ENCODE measurements at regions of chr3 and their contacts with region 1.

Region 1: DNA sequence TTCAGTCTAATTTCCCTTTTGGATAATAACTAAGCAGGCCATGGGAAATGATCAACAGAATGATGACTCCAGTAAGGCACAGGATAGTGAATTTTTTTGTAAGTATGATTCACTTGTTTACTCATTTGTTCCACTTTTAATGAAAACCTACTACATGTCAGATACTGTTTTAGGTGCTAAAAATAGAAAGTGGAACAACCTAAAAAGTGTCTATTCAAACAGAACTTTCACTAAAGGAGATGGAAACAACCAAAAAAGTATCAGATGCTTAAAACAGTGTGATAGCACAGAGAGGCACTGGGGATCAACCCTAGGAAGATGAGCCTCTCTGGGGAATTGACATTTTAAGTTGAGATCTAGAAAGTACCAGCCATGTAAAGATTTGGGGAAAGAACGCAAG is 11.1 kb downstream of the RYK start:
- DNase-seq: no peak
- H3K4me3 Mint-ChIP-seq: peak overlapping the region; percentile 51
- H3K27ac Mint-ChIP-seq: peak overlapping the region; percentile 62
- H3K4me1 Mint-ChIP-seq: peaks cover 37% of the 10 kb centered on the region
- H3K27me3 Mint-ChIP-seq: peaks cover 19% of the 10 kb centered on the region

Region 2: DNA sequence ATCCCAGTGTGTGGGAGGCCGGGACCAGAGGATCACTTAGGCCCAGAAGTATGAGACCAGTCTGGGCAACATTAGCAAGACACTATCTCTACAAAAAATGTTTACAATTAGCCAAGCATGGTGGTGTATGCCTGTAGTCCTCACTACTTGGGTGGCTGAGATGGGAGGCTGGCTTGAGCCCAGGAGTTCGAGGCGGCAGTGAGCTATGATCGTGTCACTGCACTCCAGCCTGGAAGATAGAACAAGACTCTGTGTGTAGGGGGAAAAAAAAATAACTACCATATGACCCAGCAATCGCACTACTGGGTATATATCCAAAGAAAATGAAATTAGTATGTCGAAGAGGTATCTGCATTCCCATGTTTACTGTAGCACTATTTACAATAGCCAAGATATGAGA is 11.5 kb before region 1 on chr3:
- intact Hi-C with region 1: loop called (anchors 1 kb)
- DNase-seq: no peak
- H3K4me3 Mint-ChIP-seq: no peak overlapping the region
- H3K27ac Mint-ChIP-seq: no peak overlapping the region
- H3K4me1 Mint-ChIP-seq: peaks cover 12% of the 10 kb centered on the region
- H3K27me3 Mint-ChIP-seq: peaks cover 21% of the 10 kb centered on the region

Region 3: GRCh38 chr3:134250717-134251220 is 11.2 kb after region 1 on chr3 and contains the start of gene RYK:
- intact Hi-C with region 1: loop called (anchors 1 kb)
- DNase-seq: peak; percentile 93
- H3K4me3 Mint-ChIP-seq: peak within 1 kb of the TSS; percentile 90
- H3K27ac Mint-ChIP-seq: peak within 1 kb of the TSS; percentile 93
- H3K4me1 Mint-ChIP-seq: peaks cover 29% of the 10 kb centered on the region
- H3K27me3 Mint-ChIP-seq: peaks cover 50% of the 10 kb centered on the region
- total RNA-seq, gene RYK: 17.2 and 19.9 TPM in 2 replicates

Region 4: GRCh38 chr3:134294302-134295280 is 55.1 kb after region 1 on chr3:
- intact Hi-C with region 1: loop called (anchors 2 kb)
- DNase-seq: peak; percentile 89
- H3K4me3 Mint-ChIP-seq: no peak overlapping the region
- H3K27ac Mint-ChIP-seq: no peak overlapping the region
- H3K4me1 Mint-ChIP-seq: peaks cover 2% of the 10 kb centered on the region
- H3K27me3 Mint-ChIP-seq: peaks cover 43% of the 10 kb centered on the region